Transverse colon (tissue), 4 donors: ENCODE measurements at regions of chr3 and their contacts with region 1.

Region 1: DNA sequence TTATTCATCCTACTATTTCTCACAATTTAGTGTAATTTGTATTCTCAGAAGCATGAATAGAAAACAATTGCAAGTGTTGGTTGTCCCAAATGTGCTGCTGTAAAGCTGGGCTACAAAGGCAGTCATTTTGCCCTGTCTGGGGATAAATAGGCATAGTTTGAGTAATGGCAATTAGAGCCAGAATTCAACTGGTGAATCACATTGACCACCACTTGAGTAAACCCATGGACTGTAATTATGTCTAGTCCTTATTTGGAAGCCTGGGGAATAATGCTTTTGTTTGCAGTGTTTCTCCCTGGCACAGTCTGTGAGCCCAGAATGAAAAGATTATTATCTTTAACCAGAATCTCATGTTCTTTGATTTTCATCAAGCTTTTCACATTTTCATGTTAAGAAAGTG is 30.5 kb upstream of the CHL1 start:
- DNase-seq: no peak
- H3K4me3 ChIP-seq: no peak overlapping the region
- H3K27ac ChIP-seq: no peak overlapping the region
- H3K4me1 ChIP-seq: no peaks in the 10 kb centered on the region
- H3K27me3 ChIP-seq: no peaks in the 10 kb centered on the region
- CTCF ChIP-seq: no peak
- EP300 ChIP-seq: no peak
- POLR2A ChIP-seq: no peak

Region 2: GRCh38 chr3:123341-123740 is 42.7 kb before region 1 on chr3:
- in situ Hi-C with region 1: no loop called
- intact Hi-C with region 1: loop called (anchors 2 kb)
- DNase-seq: no peak
- H3K4me3 ChIP-seq: no peak overlapping the region
- H3K27ac ChIP-seq: no peak overlapping the region
- H3K4me1 ChIP-seq: no peaks in the 10 kb centered on the region
- H3K27me3 ChIP-seq: no peaks in the 10 kb centered on the region
- CTCF ChIP-seq: no peak
- EP300 ChIP-seq: no peak
- POLR2A ChIP-seq: no peak

Region 3: GRCh38 chr3:377158-377561 is 211.1 kb after region 1 on chr3:
- in situ Hi-C with region 1: no loop called
- intact Hi-C with region 1: no loop called
- DNase-seq: no peak
- H3K4me3 ChIP-seq: no peak overlapping the region
- H3K27ac ChIP-seq: no peak overlapping the region
- H3K4me1 ChIP-seq: no peaks in the 10 kb centered on the region
- H3K27me3 ChIP-seq: peaks cover 5% of the 10 kb centered on the region
- CTCF ChIP-seq: peak; percentile 17 to 37 (median 28)
- EP300 ChIP-seq: no peak
- POLR2A ChIP-seq: no peak